Mucosa of descending colon (tissue), 3 donors: ENCODE measurements at regions of chr19 and their contacts with region 1.

Region 1: DNA sequence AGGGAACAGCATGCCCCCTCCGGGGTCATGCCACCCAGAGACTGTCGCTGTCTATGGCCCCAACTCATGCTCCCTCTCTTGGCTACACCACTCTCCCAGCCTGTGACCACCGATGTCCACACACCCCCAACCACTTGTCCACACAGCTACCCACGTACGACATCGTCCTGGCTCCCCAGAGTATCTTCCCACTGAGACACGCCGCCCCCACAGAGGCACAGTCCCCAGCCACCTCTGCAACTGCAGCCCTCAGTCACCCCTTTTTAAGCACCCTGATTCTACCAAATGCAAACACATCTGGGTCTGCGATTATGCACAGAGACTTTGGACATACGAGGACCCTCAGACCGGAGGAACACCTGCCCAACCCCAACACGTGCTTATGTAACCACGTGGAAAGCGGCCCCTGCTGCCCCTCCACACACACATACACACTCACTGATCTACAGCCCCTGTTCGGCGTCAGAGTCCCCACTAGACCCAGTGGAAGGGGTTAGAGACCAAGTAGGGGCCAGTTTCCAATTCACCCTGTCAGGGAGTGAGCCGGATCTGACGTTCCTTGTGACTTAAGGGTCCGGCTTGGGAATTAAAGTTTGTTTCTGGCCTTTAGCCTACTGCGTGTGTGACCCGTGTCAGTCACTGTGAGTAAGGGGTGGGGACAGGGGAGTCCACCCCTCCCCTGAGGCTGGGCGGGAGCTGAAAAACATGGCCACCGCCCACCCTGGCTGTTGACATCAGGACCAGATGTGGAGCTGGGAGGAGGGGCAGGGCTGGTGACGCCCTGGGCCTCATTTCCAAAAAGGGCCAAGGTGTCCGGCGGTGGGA is 11.9 kb upstream of the AXL start:
- DNase-seq: peak in 2 of 3 donors; percentile 56 to 63
- ATAC-seq: peak; percentile 53
- H3K4me3 ChIP-seq: no peak overlapping the region
- H3K4me1 ChIP-seq: no peaks in the 10 kb centered on the region
- CTCF ChIP-seq: no peak

Region 2: DNA sequence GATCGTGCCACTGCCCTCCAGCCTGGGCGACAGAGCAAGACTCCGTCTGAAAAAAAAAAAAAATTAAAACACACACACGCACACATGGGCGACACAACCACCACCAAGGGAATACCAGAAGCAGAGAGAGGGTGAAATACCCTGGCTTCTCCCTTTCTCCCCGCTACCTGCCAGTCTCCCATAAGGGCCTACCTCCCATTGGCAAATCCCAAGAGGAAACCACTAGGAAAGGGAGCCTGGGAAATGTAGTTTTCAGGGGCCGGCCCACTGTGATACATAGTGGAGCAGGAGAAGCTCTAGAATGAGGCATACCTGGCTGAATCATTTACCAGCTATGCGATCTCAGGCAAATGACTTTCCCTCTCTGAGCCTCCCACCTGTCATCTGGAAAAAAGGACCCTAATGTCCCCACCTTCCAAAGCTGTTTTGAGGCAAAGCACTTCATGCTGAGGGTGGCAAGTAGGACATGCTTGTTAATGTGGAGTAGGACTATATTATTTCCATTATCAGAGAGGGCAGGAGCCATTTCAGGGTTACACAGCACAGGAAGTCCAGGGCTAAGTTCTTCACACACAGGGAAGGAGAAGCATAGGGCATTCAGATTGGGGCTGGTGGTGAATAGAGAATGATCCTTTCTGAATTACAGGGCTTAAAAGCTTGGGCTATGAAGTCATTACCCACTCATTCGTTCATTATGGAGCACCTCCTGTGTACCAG is 42.7 kb after region 1 on chr19:
- intact Hi-C with region 1: loop called in 1 of 2 experiments (anchors 10 kb)
- DNase-seq: peak in 1 of 3 donors; percentile 2
- ATAC-seq: no peak
- H3K4me3 ChIP-seq: no peak overlapping the region
- H3K4me1 ChIP-seq: no peaks in the 10 kb centered on the region
- CTCF ChIP-seq: no peak

Region 3: DNA sequence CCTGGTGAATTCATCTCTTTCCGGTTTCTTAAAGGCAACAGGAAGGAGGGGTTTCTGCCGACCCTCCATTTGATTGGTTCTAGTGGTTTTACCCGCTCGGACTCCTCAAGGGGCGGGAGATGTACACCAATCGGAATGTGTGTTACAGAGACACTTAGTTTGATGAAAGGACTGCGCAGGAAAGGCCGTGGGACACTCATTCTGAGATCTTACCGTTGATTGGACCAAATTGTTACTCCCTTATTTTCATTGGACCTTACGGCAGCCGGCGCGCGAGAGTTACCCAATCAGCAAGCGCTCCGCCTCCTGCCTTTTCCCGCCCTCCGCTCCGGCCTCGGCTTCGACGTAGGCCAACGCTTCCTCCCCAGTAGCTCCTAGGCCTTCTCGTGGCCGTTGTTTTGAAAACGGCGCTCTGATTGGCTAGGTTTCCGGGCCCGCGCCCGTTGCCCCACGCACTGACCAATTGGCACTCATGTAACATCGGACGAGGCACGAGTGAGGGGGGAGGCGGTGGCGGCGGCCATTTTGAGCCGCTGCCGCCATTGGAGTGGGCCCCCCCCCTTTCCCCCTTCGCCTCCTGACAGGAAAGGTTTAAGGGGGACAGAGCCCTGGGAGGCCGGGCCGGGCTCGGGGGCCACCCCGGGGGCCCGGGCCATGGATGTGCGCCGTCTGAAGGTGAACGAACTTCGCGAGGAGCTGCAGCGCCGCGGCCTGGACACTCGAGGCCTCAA is 56.9 kb after region 1 on chr19 and contains the start of gene HNRNPUL1:
- intact Hi-C with region 1: loop called (anchors 5 to 10 kb)
- DNase-seq: peak; percentile 98 to 99 (median 99)
- ATAC-seq: peak; percentile 80
- H3K4me3 ChIP-seq: peak within 1 kb of the TSS; percentile 77
- H3K4me1 ChIP-seq: peaks cover 27% of the 10 kb centered on the region
- CTCF ChIP-seq: no peak
- total RNA-seq, gene HNRNPUL1: 155 to 234 (median 190) TPM

Region 4: GRCh38 chr19:41449079-41449864 is 242.1 kb after region 1 on chr19:
- intact Hi-C with region 1: no loop called
- DNase-seq: peak; percentile 72 to 80 (median 77)
- ATAC-seq: peak; percentile 94
- H3K4me3 ChIP-seq: no peak overlapping the region
- H3K4me1 ChIP-seq: no peaks in the 10 kb centered on the region
- CTCF ChIP-seq: peak; percentile 93